Left ventricle myocardium superior (tissue), 1 donor: ENCODE measurements at regions of chr5 and their contacts with region 1.

Region 1: DNA sequence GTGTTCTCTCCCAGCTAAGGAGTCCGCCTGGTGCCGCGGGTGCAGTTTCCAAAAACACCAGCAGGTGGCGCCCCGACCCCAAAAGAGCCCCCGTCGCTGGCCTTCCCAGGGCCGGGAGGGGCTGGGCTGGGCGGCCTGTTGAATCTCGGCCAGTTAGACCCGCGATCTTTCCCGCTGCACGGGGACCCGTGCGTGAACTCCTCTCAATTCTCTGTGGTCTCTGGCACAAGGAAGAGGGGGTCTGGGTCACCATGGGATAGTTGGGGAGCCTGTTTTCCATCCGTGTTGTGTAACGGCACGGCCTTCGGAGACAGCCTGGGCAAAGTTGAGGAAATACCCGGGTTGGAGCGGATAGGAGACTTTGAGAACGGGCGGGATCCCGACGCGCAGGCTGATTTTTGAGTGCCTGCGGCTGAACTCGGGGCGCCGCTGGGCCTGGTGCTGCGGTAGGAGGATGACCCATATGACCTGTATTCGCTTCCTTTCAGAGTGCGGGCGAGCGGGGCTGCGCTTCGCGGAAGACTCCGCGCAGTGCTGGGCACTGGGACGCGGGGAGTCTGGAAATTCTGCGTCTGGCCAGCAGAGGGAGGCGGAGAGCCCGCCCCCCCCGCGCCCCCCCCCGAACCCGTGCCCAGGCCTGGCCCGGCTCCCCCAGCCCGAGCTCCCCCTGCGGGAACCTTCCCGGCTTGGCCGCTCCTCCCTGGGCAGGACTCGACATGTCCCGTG is 7.9 kb upstream of the PSD2 start:
- DNase-seq: peak; percentile 92
- ATAC-seq: peak; percentile 92

Region 2: GRCh38 chr5:139863855-139864558 is 76.3 kb after region 1 on chr5:
- intact Hi-C with region 1: loop called (anchors 10 kb)
- DNase-seq: peak; percentile 74
- ATAC-seq: peak; percentile 84

Region 3: DNA sequence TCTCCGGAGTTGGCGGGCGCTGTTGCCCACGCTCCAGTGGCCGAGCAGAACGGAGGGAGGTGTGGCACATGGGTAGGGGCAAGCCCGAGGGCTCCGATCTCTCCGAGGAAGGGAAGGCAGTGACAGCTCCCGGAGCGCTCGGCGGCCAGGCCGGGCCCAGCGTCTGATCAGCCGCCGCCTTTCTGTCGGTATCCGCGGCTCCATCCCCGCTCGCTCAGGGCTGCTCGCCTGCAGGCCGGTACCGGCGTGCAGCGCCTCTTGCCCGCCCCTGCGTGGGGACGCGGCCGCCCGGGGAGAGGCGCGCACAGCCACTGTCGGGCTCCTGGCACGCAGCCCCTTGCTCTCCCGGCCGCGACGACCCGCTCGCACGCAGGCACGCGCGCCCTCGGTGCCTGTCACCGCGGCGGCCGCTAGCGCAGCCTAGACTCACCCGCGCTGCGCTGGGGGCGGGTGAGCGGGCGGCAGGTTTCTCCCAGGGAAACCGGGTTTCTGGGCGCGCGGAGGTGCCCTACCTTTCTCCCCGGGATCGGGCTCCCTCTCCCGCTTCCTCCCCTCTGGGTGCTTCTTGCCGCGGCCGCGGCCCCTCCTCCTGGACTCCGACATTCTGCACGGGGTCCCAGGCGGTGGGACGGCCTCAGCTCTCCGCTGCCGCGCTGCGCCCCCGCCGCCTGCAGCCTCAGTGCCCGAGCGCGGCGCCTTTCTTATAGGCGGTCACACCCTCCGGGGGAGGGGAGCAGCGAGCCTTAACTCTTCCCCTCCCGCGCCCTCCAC is 116.2 kb after region 1 on chr5:
- intact Hi-C with region 1: no loop called
- DNase-seq: peak; percentile 63
- ATAC-seq: peak; percentile 80

Region 4: DNA sequence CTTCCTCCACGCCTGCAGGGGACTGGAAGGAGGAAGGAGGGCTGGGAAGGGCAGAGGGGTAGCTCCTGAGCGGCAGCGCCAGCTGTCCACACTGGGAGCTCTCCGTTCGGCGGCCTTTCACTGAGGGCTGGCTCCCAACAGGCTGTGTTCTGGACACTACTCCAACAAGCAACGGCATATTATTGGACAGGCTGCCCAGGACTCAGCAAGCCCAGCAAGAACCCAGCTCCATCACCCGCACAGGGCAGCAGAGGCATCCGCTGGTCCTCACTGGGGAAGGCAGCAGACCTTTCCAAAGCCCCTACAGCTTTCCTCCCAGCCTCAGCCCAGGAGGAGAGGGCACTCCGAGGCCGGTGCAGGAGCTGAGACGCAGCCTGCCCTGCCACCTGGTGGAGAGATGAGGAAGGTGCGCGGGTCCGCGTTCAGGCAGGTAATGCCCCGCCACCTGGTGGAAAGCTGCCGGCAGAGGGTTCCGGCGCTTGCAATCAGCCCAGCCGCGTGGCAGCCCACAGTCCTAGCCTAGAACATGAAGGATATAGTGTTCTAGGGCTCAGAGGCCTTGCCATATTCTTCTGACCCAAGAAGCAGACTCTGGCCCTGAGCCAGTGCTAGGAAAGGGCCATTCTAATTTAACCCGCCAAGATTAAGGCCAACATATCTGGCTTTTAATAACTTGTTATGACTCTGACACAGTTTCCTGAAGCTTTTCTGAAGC is 181.0 kb after region 1 on chr5:
- intact Hi-C with region 1: loop called (anchors 5 kb)
- DNase-seq: peak; percentile 91
- ATAC-seq: peak; percentile 96

Region 5: DNA sequence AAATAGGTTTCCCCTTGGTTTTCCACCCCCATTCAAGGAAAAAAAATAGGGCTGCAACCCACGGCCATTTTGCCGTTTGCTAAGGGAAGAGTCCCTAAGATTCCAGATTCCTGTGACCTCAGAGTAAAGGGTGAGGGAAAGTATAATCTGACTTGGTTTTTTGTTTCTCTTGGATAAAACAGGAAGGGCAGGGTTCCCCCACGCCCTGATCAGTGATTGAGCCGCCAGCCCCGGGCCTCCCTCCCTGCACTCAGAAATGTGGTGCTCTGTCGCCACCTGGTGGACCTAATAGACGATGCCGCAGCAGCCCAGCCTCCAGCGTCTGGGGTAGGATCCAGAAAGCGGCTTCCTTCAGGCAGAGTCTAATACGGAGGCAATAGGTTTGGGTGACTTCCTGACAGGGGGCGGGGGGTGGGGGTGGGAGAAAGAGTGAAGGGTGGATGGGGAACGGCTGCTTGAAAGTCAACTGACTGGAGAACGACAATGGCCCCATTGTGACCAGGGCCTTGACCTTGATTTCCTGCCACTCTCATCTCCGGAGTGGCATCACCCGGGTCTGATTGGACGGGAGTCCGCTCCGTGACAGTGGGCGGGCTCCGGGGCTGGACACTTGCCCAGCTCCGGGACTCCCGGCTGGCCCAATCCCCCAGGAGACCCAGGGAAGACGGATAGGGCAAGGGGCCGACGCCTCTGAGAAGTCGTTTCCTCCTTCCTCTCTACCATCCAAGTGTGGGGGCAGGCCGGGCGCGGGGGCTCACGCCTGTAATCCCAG is 369.5 kb after region 1 on chr5:
- intact Hi-C with region 1: loop called (anchors 5 kb)
- DNase-seq: peak; percentile 93
- ATAC-seq: peak; percentile 96